ENCODE measurements at regions of chr17 and their contacts with region 1.

Region 1: GRCh38 chr17:45317112-45317928 is 500 bp upstream of the MAP3K14 start:
- DNase-seq: peak; percentile 100
- ATAC-seq: peak; percentile 92
- H3K4me3 Mint-ChIP-seq: peak overlapping the region; percentile 85
- H3K27ac Mint-ChIP-seq: peak overlapping the region; percentile 90
- H3K4me1 Mint-ChIP-seq: peaks cover 22% of the 10 kb centered on the region
- H3K27me3 Mint-ChIP-seq: peaks cover 37% of the 10 kb centered on the region
- CTCF ChIP-seq: no peak

Region 2: GRCh38 chr17:45291171-45291805 is 26.0 kb before region 1 on chr17:
- CTCF ChIA-PET with region 1: no interaction called
- POLR2A ChIA-PET with region 1: no interaction called
- DNase-seq: no peak
- ATAC-seq: no peak
- H3K4me3 Mint-ChIP-seq: no peak overlapping the region
- H3K27ac Mint-ChIP-seq: no peak overlapping the region
- H3K4me1 Mint-ChIP-seq: no peaks in the 10 kb centered on the region
- H3K27me3 Mint-ChIP-seq: no peaks in the 10 kb centered on the region
- CTCF ChIP-seq: no peak

Region 3: DNA sequence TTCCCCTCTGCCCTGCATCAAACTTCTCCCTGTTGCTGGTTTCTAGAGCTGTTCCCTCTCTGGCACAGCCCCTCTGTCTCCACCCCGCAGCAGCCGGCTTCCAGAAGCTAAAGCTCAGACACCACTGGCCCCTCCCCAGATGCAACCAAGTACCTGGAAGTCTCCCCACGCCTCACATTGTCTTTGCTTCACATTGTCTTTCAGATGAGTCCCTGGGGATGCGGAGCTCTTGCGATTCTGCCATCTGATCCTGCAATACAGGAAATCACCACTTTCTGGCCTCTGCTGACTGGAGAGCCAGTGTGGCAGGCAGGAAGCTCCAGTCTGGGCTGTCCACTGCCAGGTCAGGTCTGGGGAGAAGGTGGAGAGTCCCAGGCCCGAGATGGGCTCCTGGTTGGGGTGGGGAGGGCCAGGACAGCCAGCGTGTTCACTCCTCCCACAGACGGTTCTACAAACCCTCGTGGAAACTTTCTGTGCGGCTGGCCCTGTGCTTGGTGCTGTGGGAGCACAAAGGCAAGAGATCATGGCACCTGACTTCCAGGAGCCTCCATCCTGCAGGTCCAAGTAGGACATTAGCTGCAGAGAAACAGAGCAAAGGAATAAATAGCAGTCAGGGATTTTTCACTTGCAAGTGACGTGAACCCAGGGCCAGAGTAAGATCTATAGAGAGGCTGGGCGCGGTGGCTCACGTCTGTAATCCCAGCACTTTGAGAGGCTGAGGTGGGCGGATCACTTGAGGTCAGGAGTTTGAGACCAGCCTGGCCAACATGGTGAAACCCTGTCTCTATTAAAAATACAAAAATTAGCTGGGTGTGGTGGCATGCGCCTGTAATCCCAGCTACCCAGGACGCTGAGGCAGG is 47.4 kb after region 1 on chr17:
- CTCF ChIA-PET with region 1: interaction called, 14 read pairs
- POLR2A ChIA-PET with region 1: interaction called, 11 read pairs
- DNase-seq: peak; percentile 79
- ATAC-seq: peak; percentile 98
- H3K4me3 Mint-ChIP-seq: peak overlapping the region; percentile 36
- H3K27ac Mint-ChIP-seq: peak overlapping the region; percentile 97
- H3K4me1 Mint-ChIP-seq: peaks cover 39% of the 10 kb centered on the region
- H3K27me3 Mint-ChIP-seq: peaks cover 6% of the 10 kb centered on the region
- CTCF ChIP-seq: no peak

Measured in WTC11 (cell line).